Activated T-helper 1 cell treated with anti-CD3 and anti-CD28 coated beads, Interleukin-12 subunit alpha, Interleukin-12 subunit beta, Interleukin-2, Interleukin-4 antibody, amounts not matched to agents 30 ng/mL and 10 ng/mL and 1 ng/mL, durations not matched to agents 14 hours and 24 hours and 36 hours (primary cell): ENCODE measurements at regions of chr14 and their contacts with region 1.

Region 1: DNA sequence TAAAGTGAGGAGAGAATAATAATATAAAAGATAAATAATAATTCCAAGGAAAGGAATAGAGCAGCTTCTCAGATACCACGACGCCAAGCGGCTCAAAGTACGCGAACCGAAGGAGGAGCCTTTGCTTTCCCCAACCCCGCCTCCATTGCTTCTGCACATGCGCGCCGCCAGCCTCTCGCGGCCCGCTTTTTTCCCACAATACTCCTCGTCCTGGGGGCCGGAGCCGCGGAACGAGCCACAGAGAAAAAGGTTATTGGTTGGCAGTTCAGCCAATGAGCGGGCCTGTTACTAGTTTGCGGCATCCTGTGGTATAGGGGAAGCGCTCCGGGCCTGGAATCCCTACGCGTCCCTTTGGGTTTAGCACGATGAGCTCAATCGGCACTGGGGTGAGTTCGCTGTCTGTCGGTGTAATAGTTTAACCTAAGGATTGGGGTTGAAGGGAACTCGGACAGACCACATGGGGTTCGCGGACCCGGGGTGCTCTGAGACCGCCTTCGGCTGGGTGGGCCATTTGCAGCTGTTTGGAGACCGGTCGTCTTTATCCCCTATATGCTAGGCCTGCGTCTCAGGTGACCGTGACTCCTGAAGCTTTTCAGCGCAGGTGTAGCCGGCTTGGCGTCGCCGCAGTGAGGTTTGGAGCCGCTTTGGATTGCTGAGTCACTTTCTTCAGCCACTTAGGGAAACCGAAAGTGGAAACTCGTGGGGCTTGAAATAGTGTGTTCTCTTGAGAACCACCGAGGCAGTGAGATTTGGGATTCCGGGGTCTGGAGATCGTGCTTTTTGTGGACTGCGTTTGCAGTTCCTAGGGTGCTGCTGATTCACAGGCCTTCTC is at the start of gene PSMA3:
- DNase-seq: peak; percentile 97
- H3K4me3 Mint-ChIP-seq: peak within 1 kb of the TSS; percentile 95
- H3K27ac Mint-ChIP-seq: peak within 1 kb of the TSS; percentile 94
- H3K4me1 Mint-ChIP-seq: peaks cover 43% of the 10 kb centered on the region
- H3K27me3 Mint-ChIP-seq: no peaks in the 10 kb centered on the region
- total RNA-seq, gene PSMA3: 453 and 500 TPM in 2 replicates

Region 2: DNA sequence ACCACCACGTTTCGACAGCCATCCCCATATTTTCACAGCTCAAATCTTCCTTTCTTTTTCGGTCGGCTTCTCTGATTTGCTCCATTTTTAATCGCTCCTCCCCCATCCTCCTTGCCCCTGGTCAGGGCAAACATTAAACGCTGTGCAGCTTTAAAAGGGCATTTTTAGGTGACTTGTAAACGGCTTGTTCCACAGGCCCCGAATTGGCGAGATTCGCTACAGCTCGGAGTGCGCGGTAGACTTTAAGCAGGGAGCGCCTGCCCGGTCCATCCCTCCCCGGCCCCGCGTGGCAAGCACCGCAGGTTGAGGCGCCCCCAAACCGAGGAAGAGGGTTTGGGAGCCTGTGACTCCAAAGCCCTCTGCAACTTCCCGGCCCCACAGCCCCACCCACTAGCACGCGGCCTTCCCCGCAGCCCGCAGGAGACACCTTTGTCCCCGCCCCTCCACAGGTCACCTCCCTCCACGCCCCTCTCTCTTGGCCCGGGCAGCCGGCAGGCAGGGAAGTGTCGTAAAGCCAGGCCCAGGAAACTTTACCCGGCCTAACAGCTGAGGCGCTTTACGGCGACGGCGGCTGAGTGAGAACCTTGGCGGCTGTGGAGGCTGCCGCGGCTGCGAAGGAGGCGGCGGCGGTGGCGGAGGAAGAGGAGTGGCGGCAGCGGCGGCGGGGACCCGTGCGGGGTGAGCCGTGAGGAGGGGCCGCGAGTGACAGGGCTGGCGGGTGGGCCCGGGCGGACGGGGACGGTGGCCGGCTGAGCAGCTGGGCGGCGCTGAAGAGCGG is 854.6 kb before region 1 on chr14 and contains the start of gene NAA30:
- intact Hi-C with region 1: loop called (anchors 2 kb)
- DNase-seq: peak; percentile 91
- H3K4me3 Mint-ChIP-seq: peak within 1 kb of the TSS; percentile 97
- H3K27ac Mint-ChIP-seq: peak within 1 kb of the TSS; percentile 94
- H3K4me1 Mint-ChIP-seq: peaks cover 49% of the 10 kb centered on the region
- H3K27me3 Mint-ChIP-seq: peaks cover 2% of the 10 kb centered on the region
- total RNA-seq, gene NAA30: 20.8 and 20.9 TPM in 2 replicates

Region 3: DNA sequence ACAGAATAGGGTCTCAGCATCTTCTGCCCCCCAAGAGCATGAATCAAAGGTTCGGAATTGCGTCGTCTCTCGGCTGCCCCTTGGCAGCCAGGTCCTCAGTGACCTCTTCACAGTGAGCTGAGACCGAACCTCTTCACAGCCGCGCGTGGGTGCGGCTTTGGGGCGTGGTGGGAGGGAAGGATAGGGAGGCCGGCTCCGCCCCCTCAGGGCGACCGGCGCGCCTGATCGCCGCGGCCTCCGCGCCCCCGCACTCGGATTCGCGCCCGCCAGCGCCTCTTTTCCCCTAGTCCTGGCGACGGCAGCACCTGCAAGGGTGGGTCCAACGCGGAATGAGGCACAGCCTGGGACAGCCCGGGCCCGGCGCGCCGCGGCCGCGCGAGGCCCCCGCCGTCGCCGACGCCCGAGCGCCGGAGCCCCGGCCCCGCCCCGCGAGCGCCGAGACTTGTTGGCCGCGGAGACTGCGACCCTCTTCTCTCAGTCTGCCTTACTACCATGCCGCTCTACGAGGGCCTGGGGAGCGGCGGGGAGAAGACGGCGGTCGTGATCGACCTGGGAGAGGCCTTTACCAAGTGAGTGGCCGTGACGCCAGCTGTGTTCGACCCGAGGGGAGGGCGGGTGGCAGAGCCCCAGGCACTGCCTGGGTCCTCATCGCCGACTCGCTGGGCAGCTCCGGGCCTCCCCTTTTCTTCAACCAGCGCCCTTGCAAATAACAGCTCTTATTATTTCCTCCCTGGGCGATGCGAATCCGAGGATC is 44.9 kb before region 1 on chr14 and contains the start of gene ACTR10:
- intact Hi-C with region 1: loop called (anchors 1 kb)
- DNase-seq: peak; percentile 80
- H3K4me3 Mint-ChIP-seq: peak within 1 kb of the TSS; percentile 93
- H3K27ac Mint-ChIP-seq: peak within 1 kb of the TSS; percentile 86
- H3K4me1 Mint-ChIP-seq: peaks cover 24% of the 10 kb centered on the region
- H3K27me3 Mint-ChIP-seq: peaks cover 1% of the 10 kb centered on the region
- total RNA-seq, gene ACTR10: 38.3 and 40.3 TPM in 2 replicates

Region 4: GRCh38 chr14:58331111-58331510 is 86.3 kb after region 1 on chr14:
- intact Hi-C with region 1: loop called (anchors 1 kb)
- DNase-seq: peak; percentile 84
- H3K4me3 Mint-ChIP-seq: peak overlapping the region; percentile 64
- H3K27ac Mint-ChIP-seq: peak overlapping the region; percentile 91
- H3K4me1 Mint-ChIP-seq: peaks cover 19% of the 10 kb centered on the region
- H3K27me3 Mint-ChIP-seq: no peaks in the 10 kb centered on the region

Region 5: GRCh38 chr14:59189786-59190771 is 945.3 kb after region 1 on chr14:
- intact Hi-C with region 1: loop called (anchors 2 kb)
- DNase-seq: peak; percentile 73
- H3K4me3 Mint-ChIP-seq: peak overlapping the region; percentile 96
- H3K27ac Mint-ChIP-seq: peak overlapping the region; percentile 87
- H3K4me1 Mint-ChIP-seq: peaks cover 11% of the 10 kb centered on the region
- H3K27me3 Mint-ChIP-seq: peaks cover 17% of the 10 kb centered on the region